SK-N-SH (cell line): ENCODE measurements at regions of chr12 and their contacts with region 1.

Region 1: DNA sequence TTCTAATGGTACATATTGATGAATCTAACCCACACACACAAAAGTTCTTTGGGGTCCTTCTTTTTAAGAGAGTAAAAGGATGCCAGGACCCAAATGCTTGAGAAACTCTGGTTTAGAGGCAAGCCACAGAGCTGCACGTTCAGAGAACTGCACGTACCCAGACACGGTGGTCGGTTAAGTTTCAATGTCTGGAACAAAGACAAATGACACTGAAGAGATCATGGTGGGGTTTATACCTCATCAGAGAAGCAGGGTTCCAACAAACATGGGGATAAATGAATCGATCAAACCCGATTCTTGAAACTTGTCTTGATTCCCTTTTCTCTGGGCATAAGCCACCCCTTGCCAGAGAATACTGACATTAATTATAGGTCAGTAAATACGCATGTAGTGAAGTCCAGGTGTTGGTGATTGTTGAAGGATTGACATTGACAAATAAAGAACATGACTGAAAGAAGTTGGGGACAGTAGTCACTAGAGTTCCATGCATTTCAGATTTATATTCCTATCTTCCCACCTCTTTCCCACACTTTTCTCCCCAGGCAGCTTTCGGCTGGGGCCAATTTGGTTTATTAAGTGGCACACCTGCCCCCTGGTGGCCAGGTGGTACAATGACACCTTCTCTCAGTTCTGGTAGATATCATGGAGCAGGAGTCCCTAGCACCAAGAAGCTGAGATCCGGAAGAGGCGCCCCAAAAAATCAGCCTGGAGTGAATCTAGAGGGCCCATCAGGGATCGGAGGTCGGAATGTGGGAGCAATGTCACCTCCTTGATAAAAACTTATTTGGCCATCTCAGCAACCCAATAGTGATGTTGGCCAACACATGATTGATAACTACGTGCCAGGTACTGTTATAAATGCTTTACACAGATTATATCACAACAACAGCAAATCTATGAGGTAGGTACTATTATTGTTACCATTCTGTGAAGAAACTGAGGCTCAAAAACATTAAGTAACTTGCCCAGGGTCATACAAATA is 17.8 kb upstream of the HDAC7 start:
- DNase-seq: peak; percentile 81
- H3K4me3 ChIP-seq: no peak overlapping the region
- H3K27ac ChIP-seq: no peak overlapping the region
- H3K4me1 ChIP-seq: no peaks in the 10 kb centered on the region; a peak in 2 of 4 replicates
- H3K27me3 ChIP-seq: no peaks in the 10 kb centered on the region
- CTCF ChIP-seq: peak; percentile 91
- EP300 ChIP-seq: no peak
- RAD21 ChIP-seq: peak; percentile 86

Region 2: DNA sequence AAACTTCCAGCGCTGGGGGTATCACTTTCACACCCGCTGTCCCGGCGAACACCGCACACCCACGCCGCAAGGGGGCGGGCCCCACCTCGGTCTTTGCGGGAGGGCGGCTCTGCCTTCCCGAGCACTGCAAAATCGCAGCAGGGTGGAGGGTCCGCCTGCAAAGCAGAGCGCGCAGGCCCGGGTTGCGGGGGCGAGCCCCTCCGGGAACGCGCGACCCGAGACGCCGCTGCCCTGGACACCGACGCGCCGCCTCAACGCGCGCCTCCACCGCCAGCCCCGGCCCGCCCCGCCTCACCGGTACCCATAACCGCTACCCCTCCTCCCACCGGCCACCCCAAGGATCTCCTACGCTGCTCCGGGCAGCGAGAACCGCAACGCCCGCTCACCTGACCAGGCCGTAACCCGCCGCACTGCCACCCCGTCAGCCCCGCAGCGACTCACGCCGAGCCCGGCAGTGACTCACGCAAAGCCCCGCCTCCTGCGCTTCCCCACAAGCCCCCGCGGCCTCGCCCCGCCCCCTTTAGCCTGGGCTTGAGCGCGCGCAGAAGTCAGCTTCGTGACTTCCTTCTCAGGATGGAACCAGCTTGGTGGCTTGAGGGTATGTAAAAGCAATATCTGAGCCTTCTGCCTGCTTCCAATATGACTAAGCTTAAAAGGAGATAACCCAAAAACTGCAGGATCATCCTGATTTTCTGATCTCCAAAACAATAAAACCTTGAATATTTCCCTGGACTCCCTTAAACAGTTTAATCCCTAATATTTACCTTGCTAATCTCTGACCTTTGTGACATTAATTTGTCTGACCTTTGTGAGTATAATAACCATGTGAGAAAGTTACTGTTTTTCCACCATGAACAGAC is 131.7 kb before region 1 on chr12 and contains the start of gene RPAP3:
- CTCF ChIA-PET with region 1: interaction called, 387 read pairs
- POLR2A ChIA-PET with region 1: no interaction called
- DNase-seq: peak; percentile 95
- H3K4me3 ChIP-seq: peak within 1 kb of the TSS; percentile 83 to 86
- H3K27ac ChIP-seq: peak within 1 kb of the TSS; percentile 61 to 84
- H3K4me1 ChIP-seq: peaks cover 0 to 5% of the 10 kb centered on the region in 2 experiments; a peak in 2 of 4 replicates
- H3K27me3 ChIP-seq: no peaks in the 10 kb centered on the region
- CTCF ChIP-seq: peak; percentile 63
- EP300 ChIP-seq: no peak
- RAD21 ChIP-seq: no peak
- polyA plus RNA-seq, gene RPAP3: 6.7 and 9.3 TPM in 2 replicates

Region 3: GRCh38 chr12:47742253-47742825 is 95.1 kb before region 1 on chr12:
- CTCF ChIA-PET with region 1: interaction called, 109 read pairs
- POLR2A ChIA-PET with region 1: no interaction called
- DNase-seq: peak; percentile 72
- H3K4me3 ChIP-seq: no peak overlapping the region
- H3K27ac ChIP-seq: no peak overlapping the region
- H3K4me1 ChIP-seq: peaks cover 14 to 39% of the 10 kb centered on the region in 2 experiments; a peak in 3 of 4 replicates
- H3K27me3 ChIP-seq: no peaks in the 10 kb centered on the region
- CTCF ChIP-seq: peak; percentile 98
- EP300 ChIP-seq: no peak
- RAD21 ChIP-seq: peak; percentile 82

Region 4: DNA sequence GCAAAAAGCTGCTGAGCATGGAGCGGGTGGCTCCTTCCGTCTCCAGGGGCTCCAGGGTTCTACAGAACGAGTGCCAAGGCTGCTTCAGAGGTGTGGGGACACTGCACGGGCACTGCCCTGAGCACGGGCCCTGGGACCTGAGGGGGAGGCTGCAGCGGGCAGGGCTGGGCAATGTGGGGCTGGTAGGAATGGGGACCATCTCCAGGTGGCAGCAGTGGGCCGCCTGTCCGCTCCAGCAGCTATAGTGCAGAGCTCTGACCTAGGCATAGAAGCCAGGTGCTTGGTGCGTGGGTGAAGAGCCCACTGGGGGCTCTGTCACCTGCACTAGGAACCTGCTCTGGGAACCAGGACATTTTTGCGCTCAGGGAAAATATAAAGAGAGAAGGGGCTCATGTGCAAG is 40.0 kb before region 1 on chr12:
- CTCF ChIA-PET with region 1: interaction called, 247 read pairs
- POLR2A ChIA-PET with region 1: interaction called, 5 read pairs
- DNase-seq: peak; percentile 76
- H3K4me3 ChIP-seq: no peak overlapping the region
- H3K27ac ChIP-seq: no peak overlapping the region
- H3K4me1 ChIP-seq: peaks cover 6 to 21% of the 10 kb centered on the region in 2 experiments; a peak in 2 of 4 replicates
- H3K27me3 ChIP-seq: no peaks in the 10 kb centered on the region
- CTCF ChIP-seq: peak; percentile 41
- EP300 ChIP-seq: no peak
- RAD21 ChIP-seq: peak; percentile 67

Region 5: GRCh38 chr12:47850153-47851084 is 12.9 kb after region 1 on chr12:
- CTCF ChIA-PET with region 1: interaction called, 90 read pairs
- POLR2A ChIA-PET with region 1: interaction called, 3 read pairs
- DNase-seq: no peak
- H3K4me3 ChIP-seq: no peak overlapping the region
- H3K27ac ChIP-seq: no peak overlapping the region
- H3K4me1 ChIP-seq: no peaks in the 10 kb centered on the region; a peak in 1 of 4 replicates
- H3K27me3 ChIP-seq: no peaks in the 10 kb centered on the region
- CTCF ChIP-seq: no peak
- EP300 ChIP-seq: no peak
- RAD21 ChIP-seq: no peak

Region 6: GRCh38 chr12:47963340-47964040 is 126.0 kb after region 1 on chr12 and contains the start of gene TMEM106C:
- CTCF ChIA-PET with region 1: interaction called, 12 read pairs
- POLR2A ChIA-PET with region 1: no interaction called
- DNase-seq: peak; percentile 99
- H3K4me3 ChIP-seq: peak within 1 kb of the TSS; percentile 94 to 97
- H3K27ac ChIP-seq: peak within 1 kb of the TSS in 1 of 2 experiments; percentile 77; a peak in 1 of 4 replicates
- H3K4me1 ChIP-seq: peaks cover 0 to 6% of the 10 kb centered on the region in 2 experiments; a peak in 1 of 4 replicates
- H3K27me3 ChIP-seq: no peaks in the 10 kb centered on the region
- CTCF ChIP-seq: peak; percentile 92
- EP300 ChIP-seq: no peak
- RAD21 ChIP-seq: peak; percentile 71
- polyA plus RNA-seq, gene TMEM106C: 133 and 173 TPM in 2 replicates